ENCODE measurements at regions of chr16 and their contacts with region 1.

Region 1: DNA sequence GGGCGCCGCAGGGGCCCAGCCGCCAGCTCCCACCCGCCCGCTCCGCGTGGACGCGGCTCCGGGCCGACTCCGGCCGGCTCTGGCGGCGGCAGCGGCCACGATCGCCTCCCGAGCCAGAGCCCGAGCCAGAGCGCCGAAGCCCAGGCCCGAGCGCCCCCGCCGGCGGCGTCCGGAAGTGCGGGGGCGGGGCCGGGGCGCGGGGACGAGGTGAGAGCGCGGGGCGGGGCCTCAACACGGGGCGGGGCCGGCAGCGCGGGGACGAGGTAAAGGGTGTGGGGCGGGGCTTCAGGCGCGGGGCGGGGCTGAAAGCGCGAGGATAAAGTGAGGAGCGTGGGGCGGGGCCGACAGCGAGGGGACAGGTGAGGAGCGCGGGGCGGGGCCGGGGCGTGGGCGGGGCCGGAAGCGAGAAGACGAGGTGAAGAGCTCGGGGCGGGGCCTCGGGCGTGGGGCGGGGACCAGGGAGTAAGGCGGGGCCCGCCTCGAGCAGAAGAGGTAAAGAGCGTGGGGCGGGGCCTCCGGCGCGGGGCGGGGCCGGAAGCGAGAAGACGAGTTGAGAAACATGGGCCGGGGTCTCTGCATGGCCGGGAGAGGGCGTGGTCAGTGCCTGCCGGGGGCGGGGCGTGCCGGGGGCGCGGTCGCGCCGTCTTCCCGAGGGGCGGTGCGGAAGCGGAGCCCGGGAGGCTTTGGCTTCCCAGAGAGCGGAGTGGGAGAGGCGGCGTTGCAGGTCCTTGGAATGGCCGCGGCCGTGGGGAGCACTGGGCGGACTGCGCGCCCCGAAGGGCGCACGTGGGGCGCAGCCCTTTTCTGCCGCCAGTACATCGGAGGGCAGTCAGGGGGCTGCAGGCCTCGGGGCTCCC is at the start of gene AXIN1:
- DNase-seq: peak; percentile 97 to 99
- ATAC-seq: peak; percentile 89 to 97 (median 95)
- H3K4me3 ChIP-seq: peak within 1 kb of the TSS; percentile 42 to 85 (median 68)
- H3K27ac ChIP-seq: peak within 1 kb of the TSS in 9 of 10 donors; percentile 44 to 81 (median 57)
- H3K4me1 ChIP-seq: peaks cover 5 to 31% (median 15%) of the 10 kb centered on the region in 9 donors
- H3K27me3 ChIP-seq: no peaks in the 10 kb centered on the region
- CTCF ChIP-seq: peak; percentile 29 to 82 (median 49)
- total RNA-seq, gene AXIN1: 7.7 to 16.1 (median 9.2) TPM

Region 2: GRCh38 chr16:228818-229730 is 123.7 kb before region 1 on chr16 and contains the start of gene LUC7L:
- intact Hi-C with region 1: loop called in 5 of 10 experiments (anchors 2 to 10 kb)
- DNase-seq: peak; percentile 89 to 91
- ATAC-seq: peak; percentile 94 to 97 (median 95)
- H3K4me3 ChIP-seq: peak within 1 kb of the TSS; percentile 76 to 97 (median 86)
- H3K27ac ChIP-seq: peak within 1 kb of the TSS; percentile 96 to 100 (median 98)
- H3K4me1 ChIP-seq: peaks cover 5 to 30% (median 23%) of the 10 kb centered on the region in 9 donors
- H3K27me3 ChIP-seq: no peaks in the 10 kb centered on the region
- CTCF ChIP-seq: no peak
- total RNA-seq, gene LUC7L: 14.4 to 29.7 (median 20.4) TPM

Region 3: DNA sequence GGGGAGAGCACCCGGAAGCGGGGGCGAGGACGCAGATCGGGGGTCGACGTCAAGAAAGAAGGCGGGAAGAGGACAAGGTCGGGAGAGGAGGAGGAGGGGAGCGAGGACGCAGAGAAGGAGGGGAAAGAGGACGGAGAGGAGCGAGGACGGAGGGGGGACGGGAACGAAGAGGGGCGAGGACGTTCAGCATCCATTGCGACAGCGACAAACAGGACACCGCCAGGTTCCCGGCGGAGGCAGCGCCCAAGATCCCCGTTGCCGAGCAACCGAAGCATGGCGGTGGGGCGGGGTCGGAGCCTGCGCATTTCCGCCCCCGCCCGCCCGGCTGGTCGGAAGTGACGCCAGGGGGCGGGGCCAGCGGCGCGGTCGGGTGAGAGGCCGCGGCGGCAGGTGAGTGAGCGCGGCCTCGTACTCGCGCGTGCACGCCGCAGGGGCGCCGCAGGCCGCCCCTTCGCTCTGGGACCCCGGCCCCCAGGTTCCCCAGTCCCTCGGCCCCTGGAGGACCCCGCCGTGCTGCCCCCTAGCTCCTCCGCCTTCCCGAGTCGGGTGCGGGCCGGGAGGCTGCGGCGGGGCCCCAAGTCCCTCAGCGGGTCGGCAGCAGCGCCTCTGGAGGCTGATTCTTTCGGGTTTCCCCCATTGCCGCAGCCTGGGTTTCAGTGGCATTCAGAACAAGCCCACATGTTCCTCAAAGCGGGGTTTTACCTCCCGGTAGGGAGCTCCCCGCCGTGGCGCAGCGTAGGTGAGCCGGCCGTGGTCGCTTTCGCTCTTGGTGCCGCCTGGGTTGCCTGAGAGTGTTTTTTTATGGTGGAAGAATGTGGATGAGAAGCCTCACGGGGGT is 118.1 kb before region 1 on chr16 and contains the start of gene FAM234A:
- intact Hi-C with region 1: loop called in 6 of 10 experiments (anchors 2 to 10 kb)
- DNase-seq: peak; percentile 93 to 94
- ATAC-seq: peak; percentile 93 to 98 (median 96)
- H3K4me3 ChIP-seq: peak within 1 kb of the TSS; percentile 72 to 98 (median 90)
- H3K27ac ChIP-seq: peak within 1 kb of the TSS; percentile 88 to 99 (median 96)
- H3K4me1 ChIP-seq: peaks cover 0 to 25% (median 14%) of the 10 kb centered on the region in 9 donors
- H3K27me3 ChIP-seq: no peaks in the 10 kb centered on the region
- CTCF ChIP-seq: peak; percentile 14 to 66 (median 47)
- total RNA-seq, gene FAM234A: 114 to 200 (median 161) TPM

Region 4: GRCh38 chr16:239953-240287 is 112.9 kb before region 1 on chr16:
- intact Hi-C with region 1: loop called in 4 of 10 experiments (anchors 2 to 10 kb)
- DNase-seq: no peak
- ATAC-seq: peak in 1 of 8 donors; percentile 27
- H3K4me3 ChIP-seq: no peak overlapping the region
- H3K27ac ChIP-seq: peak overlapping the region in 8 of 10 donors; percentile 17 to 78 (median 48)
- H3K4me1 ChIP-seq: peaks cover 3 to 65% (median 42%) of the 10 kb centered on the region in 9 donors
- H3K27me3 ChIP-seq: no peaks in the 10 kb centered on the region
- CTCF ChIP-seq: no peak

Region 5: GRCh38 chr16:424033-424622 is 71.4 kb after region 1 on chr16:
- intact Hi-C with region 1: no loop called
- DNase-seq: peak in 1 of 2 donors; percentile 85
- ATAC-seq: peak; percentile 59 to 88 (median 86)
- H3K4me3 ChIP-seq: peak overlapping the region in 9 of 10 donors; percentile 51 to 82 (median 74)
- H3K27ac ChIP-seq: peak overlapping the region; percentile 66 to 99 (median 94)
- H3K4me1 ChIP-seq: peaks cover 0 to 49% (median 37%) of the 10 kb centered on the region in 9 donors
- H3K27me3 ChIP-seq: peaks cover 0 to 6% (median 0%) of the 10 kb centered on the region in 7 donors
- CTCF ChIP-seq: no peak

Region 6: GRCh38 chr16:456891-457483 is 104.2 kb after region 1 on chr16:
- intact Hi-C with region 1: no loop called
- DNase-seq: no peak
- ATAC-seq: peak in 5 of 8 donors; percentile 31 to 63 (median 51)
- H3K4me3 ChIP-seq: no peak overlapping the region
- H3K27ac ChIP-seq: peak overlapping the region in 7 of 10 donors; percentile 56 to 82 (median 70)
- H3K4me1 ChIP-seq: peaks cover 3 to 21% (median 18%) of the 10 kb centered on the region in 9 donors
- H3K27me3 ChIP-seq: no peaks in the 10 kb centered on the region
- CTCF ChIP-seq: no peak

Region 7: GRCh38 chr16:535446-536405 is 183.0 kb after region 1 on chr16:
- intact Hi-C with region 1: no loop called
- DNase-seq: no peak
- ATAC-seq: peak in 3 of 8 donors; percentile 10 to 53 (median 18)
- H3K4me3 ChIP-seq: no peak overlapping the region
- H3K27ac ChIP-seq: no peak overlapping the region
- H3K4me1 ChIP-seq: peaks cover 0 to 39% (median 12%) of the 10 kb centered on the region in 9 donors
- H3K27me3 ChIP-seq: no peaks in the 10 kb centered on the region
- CTCF ChIP-seq: no peak